RWPE1 (cell line): ENCODE measurements at regions of chr12 and their contacts with region 1.

Region 1: DNA sequence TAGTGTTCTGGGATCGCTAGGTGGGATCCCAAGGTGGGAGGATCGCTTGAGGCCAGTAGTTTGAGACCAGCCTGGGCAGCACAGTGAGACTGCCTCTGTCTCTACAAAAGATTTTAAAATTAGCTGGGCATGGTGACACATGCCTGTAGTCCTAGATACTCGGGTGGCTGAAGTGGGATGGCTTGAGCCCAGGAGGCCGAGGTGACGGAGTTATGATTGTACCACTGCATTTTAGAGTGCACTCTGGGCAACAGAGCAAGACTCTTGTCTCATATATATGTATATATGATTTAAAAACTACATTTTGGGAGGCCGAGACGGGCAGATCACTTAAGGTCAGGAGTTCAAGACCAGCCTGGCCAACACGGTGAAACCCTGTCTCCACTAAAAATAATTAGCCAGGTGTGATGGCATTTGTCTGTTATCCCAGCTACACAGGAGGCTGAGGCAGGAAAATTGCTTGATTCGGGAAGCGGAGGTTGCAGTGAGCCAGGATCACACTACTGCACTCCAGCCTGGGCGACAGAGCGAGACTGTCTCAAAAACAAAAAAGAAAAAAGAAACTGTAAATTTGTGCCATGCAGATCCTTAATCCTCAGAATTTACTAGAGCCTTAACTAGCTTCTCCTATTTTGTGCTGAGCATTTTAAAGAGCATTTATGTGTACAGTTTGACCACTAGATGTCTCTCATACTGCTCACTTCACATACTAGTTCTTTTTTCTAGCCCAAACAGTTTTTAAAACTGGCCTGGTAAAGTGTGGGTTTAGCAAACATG is 114.8 kb downstream of the MON2 start:
- DNase-seq: peak; percentile 40
- H3K27ac ChIP-seq: no peak overlapping the region
- CTCF ChIP-seq: peak; percentile 69

Region 2: DNA sequence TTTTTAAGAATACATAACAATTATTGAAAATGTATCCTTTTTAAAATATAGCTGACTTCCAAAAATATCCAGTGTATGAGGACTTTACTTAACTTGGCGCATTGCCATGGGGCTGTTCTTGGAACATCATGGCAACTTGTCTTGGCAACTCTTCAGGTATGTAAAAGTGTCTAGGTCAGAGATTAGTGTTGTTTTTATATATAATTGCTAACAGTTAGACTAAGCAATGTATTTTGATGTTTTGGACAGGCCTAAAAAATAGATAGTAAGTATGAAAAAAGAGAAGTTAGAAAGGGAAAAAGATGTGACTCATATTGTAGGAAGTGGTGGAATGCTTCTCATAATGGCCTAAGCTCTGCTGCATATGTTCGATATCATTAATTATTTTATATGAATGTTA is 43.9 kb before region 1 on chr12:
- CTCF ChIA-PET with region 1: no interaction called
- POLR2A ChIA-PET with region 1: no interaction called
- DNase-seq: no peak
- H3K27ac ChIP-seq: no peak overlapping the region
- CTCF ChIP-seq: no peak

Region 3: DNA sequence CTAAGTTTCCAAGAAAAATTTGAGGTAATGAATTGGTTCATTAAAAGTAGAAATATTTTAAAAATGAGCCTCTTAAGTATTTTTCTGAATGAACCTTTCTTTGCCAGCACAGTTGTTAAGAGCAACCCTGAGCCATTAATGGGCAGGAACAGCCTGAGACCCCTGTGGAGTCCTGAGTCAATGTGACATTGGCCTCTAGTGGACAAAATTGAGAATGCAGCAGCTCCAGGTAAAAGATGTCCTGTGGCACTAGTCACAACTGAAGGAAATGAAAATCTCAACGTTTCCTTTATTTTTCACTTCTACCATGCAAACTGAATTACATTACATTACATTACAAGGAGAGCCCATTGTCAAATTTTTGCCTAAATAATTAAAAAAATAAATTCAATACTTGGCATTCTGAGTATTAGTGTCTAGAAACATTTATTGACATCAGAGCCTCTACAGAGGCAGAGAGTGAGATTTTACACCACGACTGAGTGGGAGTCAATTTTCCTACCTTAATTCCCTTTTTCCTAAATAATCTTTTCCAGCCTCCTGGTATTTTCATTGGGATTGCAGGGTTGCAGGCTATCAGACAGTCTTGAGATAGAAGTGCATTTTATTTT is 217.8 kb after region 1 on chr12:
- CTCF ChIA-PET with region 1: interaction called, 20 read pairs
- POLR2A ChIA-PET with region 1: no interaction called
- DNase-seq: peak; percentile 56
- H3K27ac ChIP-seq: no peak overlapping the region
- CTCF ChIP-seq: peak; percentile 96